ENCODE measurements at regions of chr12 and their contacts with region 1.

Region 1: DNA sequence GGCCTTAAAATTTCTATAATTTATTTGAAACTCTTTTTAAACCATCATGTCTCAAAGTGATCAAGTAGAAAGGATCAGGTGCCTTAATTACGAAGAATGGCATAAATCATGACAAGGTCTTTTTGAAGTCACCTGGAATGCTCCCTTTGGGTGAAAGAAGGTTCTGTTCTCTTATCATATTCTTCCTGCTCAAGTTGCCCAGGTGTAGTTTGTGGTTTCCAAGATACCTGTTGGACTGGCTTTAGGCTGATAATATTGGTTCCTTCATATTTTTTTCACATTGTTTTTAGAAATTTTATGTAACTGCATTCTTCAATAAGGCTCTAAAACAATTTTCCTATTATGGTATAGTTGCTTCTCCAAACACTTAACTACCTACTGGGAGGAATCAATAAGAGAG is 29.2 kb downstream of the RASSF3 start:
- DNase-seq: no peak
- ATAC-seq: no peak
- H3K4me3 ChIP-seq: no peak overlapping the region
- H3K27ac ChIP-seq: no peak overlapping the region
- H3K4me1 ChIP-seq: peaks cover 11% of the 10 kb centered on the region
- H3K27me3 ChIP-seq: no peaks in the 10 kb centered on the region
- CTCF ChIP-seq: no peak
- EP300 ChIP-seq: no peak
- POLR2A ChIP-seq: no peak
- RAD21 ChIP-seq: no peak

Region 2: DNA sequence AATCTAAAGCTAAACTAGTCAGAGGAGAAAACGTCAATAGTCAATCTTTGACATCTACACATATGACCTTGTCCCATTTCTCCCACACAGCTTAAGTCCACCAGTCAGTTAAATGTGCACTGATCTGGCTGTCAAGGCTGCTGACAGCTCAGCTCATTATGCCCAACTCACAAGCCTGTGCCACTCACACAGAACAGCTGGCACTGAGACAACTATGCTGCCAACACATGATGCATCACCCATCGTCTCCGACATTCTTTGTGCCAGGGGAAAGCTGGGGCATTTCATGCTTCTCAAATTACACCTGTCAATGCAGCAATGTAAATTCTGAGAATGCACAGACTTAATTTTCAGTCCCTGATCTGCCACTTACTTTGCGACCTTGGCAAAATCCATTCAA is 94.4 kb after region 1 on chr12:
- CTCF ChIA-PET with region 1: no interaction called
- POLR2A ChIA-PET with region 1: no interaction called
- RAD21 ChIA-PET with region 1: no interaction called
- SMC1A ChIA-PET with region 1: no interaction called
- in situ Hi-C with region 1: no loop called
- intact Hi-C with region 1: loop called (anchors 1 kb)
- DNase-seq: no peak
- ATAC-seq: no peak
- H3K4me3 ChIP-seq: no peak overlapping the region
- H3K27ac ChIP-seq: no peak overlapping the region
- H3K4me1 ChIP-seq: peaks cover 6% of the 10 kb centered on the region
- H3K27me3 ChIP-seq: no peaks in the 10 kb centered on the region
- CTCF ChIP-seq: no peak
- EP300 ChIP-seq: no peak
- POLR2A ChIP-seq: no peak
- RAD21 ChIP-seq: no peak

Region 3: DNA sequence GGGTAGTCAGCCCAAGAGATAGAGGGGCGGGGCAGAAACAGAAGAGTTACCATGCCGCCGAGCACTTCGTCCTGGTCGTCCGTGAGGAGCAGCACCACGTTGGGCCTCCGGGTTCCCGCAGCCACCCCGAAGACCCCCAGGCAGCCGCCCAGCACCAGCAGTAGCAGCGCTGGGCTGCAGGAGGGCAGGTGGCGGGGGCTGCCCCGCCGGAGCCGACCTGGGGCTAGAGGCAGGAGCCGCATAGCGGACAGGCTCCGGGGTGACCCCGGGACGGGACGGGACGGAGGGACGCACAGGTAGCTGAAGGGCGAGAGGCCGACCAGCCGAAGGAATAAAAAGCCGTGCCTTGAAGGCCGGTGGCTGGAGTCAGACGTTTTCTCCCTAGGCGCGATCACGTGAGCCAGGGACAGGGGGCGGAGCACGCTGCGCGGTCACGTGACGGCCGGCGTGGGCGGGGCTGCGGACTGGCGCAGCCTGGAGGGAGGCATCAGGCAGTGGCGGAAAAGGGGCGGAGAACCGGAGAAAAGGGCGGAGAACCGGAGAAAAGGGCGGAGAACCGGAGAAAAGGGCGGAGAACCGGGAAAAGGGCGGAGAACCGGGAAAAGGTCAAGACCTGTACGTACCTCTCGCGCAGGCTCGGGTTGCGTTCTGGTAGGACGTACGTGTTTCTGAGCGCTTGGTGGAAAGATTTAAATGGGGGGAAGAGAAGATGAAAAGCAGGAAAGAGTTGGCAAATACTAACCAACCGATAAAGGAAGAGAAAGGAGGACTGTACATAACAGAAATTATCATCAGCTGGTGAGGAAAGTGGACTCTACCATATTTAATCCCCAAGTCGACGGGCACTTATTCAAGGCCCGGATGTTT is 119.8 kb after region 1 on chr12 and contains the start of gene GNS:
- CTCF ChIA-PET with region 1: no interaction called
- POLR2A ChIA-PET with region 1: interaction called, 10 read pairs
- RAD21 ChIA-PET with region 1: no interaction called
- SMC1A ChIA-PET with region 1: no interaction called
- in situ Hi-C with region 1: no loop called
- intact Hi-C with region 1: no loop called
- DNase-seq: peak; percentile 85
- ATAC-seq: peak; percentile 90
- H3K4me3 ChIP-seq: peak within 1 kb of the TSS; percentile 87
- H3K27ac ChIP-seq: peak within 1 kb of the TSS; percentile 65
- H3K4me1 ChIP-seq: peaks cover 8% of the 10 kb centered on the region
- H3K27me3 ChIP-seq: no peaks in the 10 kb centered on the region
- CTCF ChIP-seq: no peak
- EP300 ChIP-seq: no peak
- POLR2A ChIP-seq: peak; percentile 81
- RAD21 ChIP-seq: no peak
- polyA plus RNA-seq, gene GNS: 4.1 to 4.4 TPM